AG04449 (cell line): ENCODE measurements at regions of chr15 and their contacts with region 1.

Region 1: DNA sequence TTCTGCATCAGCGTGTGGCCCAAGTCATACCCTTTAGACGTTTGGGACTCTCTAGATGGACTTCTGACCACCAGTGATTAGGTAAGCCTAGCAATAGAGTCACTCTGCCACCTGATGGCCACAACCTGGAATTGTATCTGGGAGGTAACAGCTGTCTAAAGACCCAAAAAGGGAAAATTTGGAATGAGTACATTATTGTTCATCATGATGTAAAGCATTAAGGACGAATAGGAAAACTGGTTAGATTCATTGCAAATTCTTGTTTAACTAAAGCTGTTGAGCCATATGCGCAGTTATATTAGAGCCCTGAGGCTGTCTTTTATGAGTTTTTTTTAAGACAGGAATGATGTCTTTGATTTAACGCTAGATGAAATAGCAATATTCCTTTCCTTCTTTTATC is 63.6 kb downstream of the FAM81A start:
- DNase-seq: no peak
- H3K4me3 ChIP-seq: no peak overlapping the region
- CTCF ChIP-seq: peak; percentile 47

Region 2: DNA sequence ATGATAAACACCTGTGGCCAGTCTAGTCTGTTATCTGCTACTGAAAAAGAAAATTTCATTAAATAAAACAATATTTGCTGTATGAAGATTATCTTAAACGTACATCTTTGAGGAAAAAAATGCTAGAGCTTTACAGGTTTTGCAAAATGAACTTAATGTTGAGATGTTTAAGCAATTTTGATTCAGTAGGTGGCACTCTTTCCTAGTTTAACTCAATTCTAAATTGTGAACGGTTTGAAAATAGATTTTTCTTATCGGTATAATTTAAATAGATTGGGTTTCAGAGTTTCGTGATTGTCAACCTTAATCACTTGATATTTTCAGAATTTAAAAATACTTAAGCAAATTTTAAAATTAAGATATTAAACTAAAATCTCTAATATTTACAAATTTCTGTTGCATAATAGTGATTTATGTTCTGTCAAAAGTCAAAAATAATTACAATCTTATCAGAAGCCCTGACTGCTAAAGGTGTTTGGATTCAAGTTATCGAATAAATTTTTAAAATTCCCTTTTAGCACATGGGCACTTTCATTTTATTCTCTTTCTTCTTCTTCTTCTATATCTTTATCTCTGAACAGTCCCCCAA is 521.2 kb before region 1 on chr15:
- CTCF ChIA-PET with region 1: interaction called, 32 read pairs
- POLR2A ChIA-PET with region 1: no interaction called
- DNase-seq: no peak
- H3K4me3 ChIP-seq: no peak overlapping the region
- CTCF ChIP-seq: peak; percentile 21